ENCODE measurements at regions of chr9 and their contacts with region 1.

Region 1: GRCh38 chr9:36190388-36191287 is at the start of gene CLTA:
- DNase-seq: peak; percentile 75 to 97 (median 96)
- ATAC-seq: peak; percentile 99
- H3K4me3 ChIP-seq: peak within 1 kb of the TSS; percentile 98
- H3K4me3 Mint-ChIP-seq: peak within 1 kb of the TSS; percentile 86 to 98 (median 95)
- H3K27ac ChIP-seq: peak within 1 kb of the TSS; percentile 91
- H3K27ac Mint-ChIP-seq: peak within 1 kb of the TSS; percentile 80 to 97 (median 94)
- H3K4me1 ChIP-seq: peaks cover 25 to 35% of the 10 kb centered on the region in 2 donors
- H3K4me1 Mint-ChIP-seq: peaks cover 43 to 58% (median 49%) of the 10 kb centered on the region in 7 donors
- H3K27me3 ChIP-seq: no peaks in the 10 kb centered on the region
- H3K27me3 Mint-ChIP-seq: no peaks in the 10 kb centered on the region
- total RNA-seq, gene CLTA: 32.2 to 140 (median 69.5) TPM

Region 2: DNA sequence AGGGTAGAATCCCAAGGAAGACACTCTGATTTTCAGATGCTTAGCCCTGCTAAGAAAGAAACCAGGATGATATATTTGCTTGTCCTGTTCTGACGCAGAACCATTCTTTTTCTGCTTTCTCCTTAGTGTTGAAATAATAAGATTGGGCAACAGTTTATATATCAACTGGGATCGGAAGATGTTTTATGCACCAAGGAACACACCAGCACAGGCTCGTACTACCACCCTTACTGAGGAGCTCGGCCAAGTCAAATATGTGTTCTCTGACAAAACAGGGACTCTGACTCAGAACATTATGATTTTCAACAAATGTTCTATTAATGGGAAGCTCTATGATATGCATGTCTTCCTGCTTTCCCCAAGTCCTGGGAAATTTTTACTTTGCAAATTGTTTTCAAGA is 719.7 kb before region 1 on chr9:
- CTCF ChIA-PET with region 1: no interaction called
- POLR2A ChIA-PET with region 1: no interaction called
- intact Hi-C with region 1: no loop called
- DNase-seq: no peak
- ATAC-seq: no peak
- H3K4me3 ChIP-seq: no peak overlapping the region
- H3K4me3 Mint-ChIP-seq: no peak overlapping the region
- H3K27ac ChIP-seq: no peak overlapping the region
- H3K27ac Mint-ChIP-seq: no peak overlapping the region
- H3K4me1 ChIP-seq: no peaks in the 10 kb centered on the region
- H3K4me1 Mint-ChIP-seq: no peaks in the 10 kb centered on the region
- H3K27me3 ChIP-seq: no peaks in the 10 kb centered on the region
- H3K27me3 Mint-ChIP-seq: peaks cover 17 to 50% (median 23%) of the 10 kb centered on the region in 5 donors

Region 3: GRCh38 chr9:36036780-36037548 is 153.7 kb before region 1 on chr9 and contains the start of gene RECK:
- CTCF ChIA-PET with region 1: no interaction called
- POLR2A ChIA-PET with region 1: no interaction called
- intact Hi-C with region 1: loop called in 1 of 2 experiments (anchors 1 kb)
- DNase-seq: peak; percentile 70 to 95 (median 80)
- ATAC-seq: peak; percentile 98
- H3K4me3 ChIP-seq: peak within 1 kb of the TSS; percentile 69
- H3K4me3 Mint-ChIP-seq: peak within 1 kb of the TSS; percentile 86 to 98 (median 92)
- H3K27ac ChIP-seq: peak within 1 kb of the TSS; percentile 72
- H3K27ac Mint-ChIP-seq: peak within 1 kb of the TSS; percentile 55 to 90 (median 81)
- H3K4me1 ChIP-seq: peaks cover 0 to 31% of the 10 kb centered on the region in 2 donors
- H3K4me1 Mint-ChIP-seq: peaks cover 27 to 50% (median 46%) of the 10 kb centered on the region in 7 donors
- H3K27me3 ChIP-seq: no peaks in the 10 kb centered on the region
- H3K27me3 Mint-ChIP-seq: peaks cover 0 to 21% (median 0%) of the 10 kb centered on the region in 5 donors
- total RNA-seq, gene RECK: 7.4 to 16.7 (median 13.3) TPM

Region 4: GRCh38 chr9:36151316-36152210 is 39.1 kb before region 1 on chr9:
- CTCF ChIA-PET with region 1: no interaction called
- POLR2A ChIA-PET with region 1: interaction called, 3 read pairs
- intact Hi-C with region 1: loop called (anchors 1 kb)
- DNase-seq: peak; percentile 63 to 91 (median 87)
- ATAC-seq: peak; percentile 94
- H3K4me3 ChIP-seq: peak overlapping the region; percentile 53
- H3K4me3 Mint-ChIP-seq: peak overlapping the region; percentile 74 to 91 (median 88)
- H3K27ac ChIP-seq: peak overlapping the region; percentile 88
- H3K27ac Mint-ChIP-seq: peak overlapping the region; percentile 97 to 99 (median 99)
- H3K4me1 ChIP-seq: peaks cover 63 to 68% of the 10 kb centered on the region in 2 donors
- H3K4me1 Mint-ChIP-seq: peaks cover 46 to 68% (median 61%) of the 10 kb centered on the region in 7 donors
- H3K27me3 ChIP-seq: no peaks in the 10 kb centered on the region
- H3K27me3 Mint-ChIP-seq: no peaks in the 10 kb centered on the region

Region 5: DNA sequence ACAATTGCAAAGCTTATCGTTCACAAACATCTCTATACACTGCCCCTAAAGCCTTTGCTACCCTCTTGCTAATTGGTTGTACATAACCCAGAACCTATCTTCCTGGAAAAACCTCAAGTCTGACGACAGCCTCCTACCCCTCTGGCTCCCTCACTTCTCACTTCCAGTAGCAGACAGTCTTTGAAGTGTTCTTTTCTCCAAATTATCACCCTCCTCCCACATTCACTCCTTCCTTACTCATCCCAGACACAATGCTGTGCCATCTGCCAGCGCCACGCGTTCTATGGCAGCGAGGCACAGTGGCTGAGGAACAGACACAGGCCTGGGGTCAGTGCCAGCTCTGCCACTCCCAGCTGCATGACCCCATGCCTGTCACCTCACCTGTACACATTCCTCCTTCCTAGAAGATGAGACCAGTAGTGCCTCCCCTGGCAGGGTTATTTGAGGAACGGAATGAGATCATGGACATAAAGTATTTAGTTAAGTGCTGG is 27.8 kb after region 1 on chr9:
- CTCF ChIA-PET with region 1: interaction called, 4 read pairs
- POLR2A ChIA-PET with region 1: interaction called, 4 read pairs
- intact Hi-C with region 1: loop called in 1 of 2 experiments (anchors 1 kb)
- DNase-seq: peak in 1 of 9 donors; percentile 28
- ATAC-seq: peak; percentile 26
- H3K4me3 ChIP-seq: no peak overlapping the region
- H3K4me3 Mint-ChIP-seq: peak overlapping the region in 2 of 10 donors; percentile 30 to 64
- H3K27ac ChIP-seq: peak overlapping the region; percentile 36
- H3K27ac Mint-ChIP-seq: peak overlapping the region; percentile 29 to 86 (median 72)
- H3K4me1 ChIP-seq: peaks cover 0 to 18% of the 10 kb centered on the region in 2 donors
- H3K4me1 Mint-ChIP-seq: peaks cover 20 to 50% (median 42%) of the 10 kb centered on the region in 7 donors
- H3K27me3 ChIP-seq: no peaks in the 10 kb centered on the region
- H3K27me3 Mint-ChIP-seq: no peaks in the 10 kb centered on the region

Region 6: DNA sequence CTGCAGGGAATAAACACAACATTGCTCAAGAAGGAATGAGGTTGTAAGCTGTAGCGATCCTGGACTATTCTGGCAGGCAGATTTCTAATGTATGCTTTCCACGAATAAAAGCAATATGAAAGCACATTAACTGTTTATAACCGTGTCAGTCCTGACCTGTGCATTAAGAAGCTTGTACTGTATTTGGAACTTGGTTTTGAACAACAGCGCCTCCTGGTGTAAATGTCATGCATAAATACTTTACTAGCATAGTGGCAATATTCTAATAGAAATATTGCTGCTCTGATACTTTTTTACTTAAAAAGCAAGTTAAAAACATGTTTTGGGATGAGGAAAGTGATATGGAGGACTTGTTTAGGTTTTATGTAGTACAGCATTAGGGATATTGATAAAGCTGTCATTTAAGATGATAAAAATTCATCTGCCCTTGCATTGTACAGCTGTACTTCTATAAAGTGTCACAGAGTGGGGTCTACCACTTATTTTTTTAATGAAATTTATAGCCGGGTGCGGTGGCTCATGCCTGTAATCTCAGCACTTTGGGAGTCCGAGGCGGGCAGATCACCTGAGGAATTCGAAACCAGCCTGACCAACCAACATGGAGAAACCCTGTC is 138.3 kb after region 1 on chr9:
- CTCF ChIA-PET with region 1: interaction called, 25 read pairs
- POLR2A ChIA-PET with region 1: interaction called, 5 read pairs
- intact Hi-C with region 1: loop called (anchors 1 kb)
- DNase-seq: peak in 7 of 9 donors; percentile 33 to 70 (median 62)
- ATAC-seq: peak; percentile 74
- H3K4me3 ChIP-seq: no peak overlapping the region
- H3K4me3 Mint-ChIP-seq: no peak overlapping the region
- H3K27ac ChIP-seq: no peak overlapping the region
- H3K27ac Mint-ChIP-seq: peak overlapping the region in 1 of 9 donors; percentile 36
- H3K4me1 ChIP-seq: no peaks in the 10 kb centered on the region
- H3K4me1 Mint-ChIP-seq: peaks cover 0 to 16% (median 4%) of the 10 kb centered on the region in 7 donors
- H3K27me3 ChIP-seq: no peaks in the 10 kb centered on the region
- H3K27me3 Mint-ChIP-seq: no peaks in the 10 kb centered on the region

Region 7: GRCh38 chr9:36572515-36573418 is 382.1 kb after region 1 on chr9 and contains the start of gene MELK:
- CTCF ChIA-PET with region 1: no interaction called
- POLR2A ChIA-PET with region 1: no interaction called
- intact Hi-C with region 1: loop called (anchors 1 to 2 kb)
- DNase-seq: peak; percentile 69 to 94 (median 82)
- ATAC-seq: peak; percentile 97
- H3K4me3 ChIP-seq: peak within 1 kb of the TSS; percentile 83
- H3K4me3 Mint-ChIP-seq: peak within 1 kb of the TSS; percentile 88 to 95 (median 90)
- H3K27ac ChIP-seq: peak within 1 kb of the TSS; percentile 76
- H3K27ac Mint-ChIP-seq: peak within 1 kb of the TSS; percentile 62 to 90 (median 83)
- H3K4me1 ChIP-seq: peaks cover 0 to 5% of the 10 kb centered on the region in 2 donors
- H3K4me1 Mint-ChIP-seq: peaks cover 7 to 38% (median 13%) of the 10 kb centered on the region in 7 donors
- H3K27me3 ChIP-seq: no peaks in the 10 kb centered on the region
- H3K27me3 Mint-ChIP-seq: peaks cover 0 to 5% (median 0%) of the 10 kb centered on the region in 5 donors
- total RNA-seq, gene MELK: 0.22 to 40.2 (median 0.88) TPM in 3 of 5 experiments, not detected in the others

Region 8: GRCh38 chr9:37119907-37120842 is 929.5 kb after region 1 on chr9 and contains the start of gene ZCCHC7:
- CTCF ChIA-PET with region 1: no interaction called
- POLR2A ChIA-PET with region 1: no interaction called
- intact Hi-C with region 1: loop called in 1 of 2 experiments (anchors 2 kb)
- DNase-seq: peak; percentile 95 to 99 (median 98)
- ATAC-seq: peak; percentile 97
- H3K4me3 ChIP-seq: peak within 1 kb of the TSS; percentile 93
- H3K4me3 Mint-ChIP-seq: peak within 1 kb of the TSS; percentile 88 to 99 (median 96)
- H3K27ac ChIP-seq: peak within 1 kb of the TSS; percentile 100
- H3K27ac Mint-ChIP-seq: peak within 1 kb of the TSS; percentile 93 to 100 (median 97)
- H3K4me1 ChIP-seq: peaks cover 11 to 25% of the 10 kb centered on the region in 2 donors
- H3K4me1 Mint-ChIP-seq: peaks cover 16 to 42% (median 32%) of the 10 kb centered on the region in 7 donors
- H3K27me3 ChIP-seq: no peaks in the 10 kb centered on the region
- H3K27me3 Mint-ChIP-seq: no peaks in the 10 kb centered on the region
- total RNA-seq, gene ZCCHC7: 26.1 to 47.1 (median 40.9) TPM

Measured in naive thymus-derived CD4-positive, alpha-beta T cell (primary cell).